CD4-positive, alpha-beta memory T cell (primary cell): ENCODE measurements at regions of chr1 and their contacts with region 1.

Region 1: GRCh38 chr1:171485375-171486047 is at the start of gene PRRC2C:
- DNase-seq: peak; percentile 93 to 96 (median 95)
- H3K4me3 ChIP-seq: peak within 1 kb of the TSS; percentile 45 to 99
- H3K4me3 Mint-ChIP-seq: peak within 1 kb of the TSS; percentile 90 to 99 (median 93)
- H3K27ac ChIP-seq: peak within 1 kb of the TSS; percentile 100
- H3K27ac Mint-ChIP-seq: peak within 1 kb of the TSS; percentile 95 to 100 (median 100)
- H3K4me1 ChIP-seq: peaks cover 48% of the 10 kb centered on the region
- H3K4me1 Mint-ChIP-seq: peaks cover 40 to 56% (median 48%) of the 10 kb centered on the region in 4 donors
- H3K27me3 ChIP-seq: no peaks in the 10 kb centered on the region
- H3K27me3 Mint-ChIP-seq: no peaks in the 10 kb centered on the region
- total RNA-seq, gene PRRC2C: 279 to 298 TPM

Region 2: DNA sequence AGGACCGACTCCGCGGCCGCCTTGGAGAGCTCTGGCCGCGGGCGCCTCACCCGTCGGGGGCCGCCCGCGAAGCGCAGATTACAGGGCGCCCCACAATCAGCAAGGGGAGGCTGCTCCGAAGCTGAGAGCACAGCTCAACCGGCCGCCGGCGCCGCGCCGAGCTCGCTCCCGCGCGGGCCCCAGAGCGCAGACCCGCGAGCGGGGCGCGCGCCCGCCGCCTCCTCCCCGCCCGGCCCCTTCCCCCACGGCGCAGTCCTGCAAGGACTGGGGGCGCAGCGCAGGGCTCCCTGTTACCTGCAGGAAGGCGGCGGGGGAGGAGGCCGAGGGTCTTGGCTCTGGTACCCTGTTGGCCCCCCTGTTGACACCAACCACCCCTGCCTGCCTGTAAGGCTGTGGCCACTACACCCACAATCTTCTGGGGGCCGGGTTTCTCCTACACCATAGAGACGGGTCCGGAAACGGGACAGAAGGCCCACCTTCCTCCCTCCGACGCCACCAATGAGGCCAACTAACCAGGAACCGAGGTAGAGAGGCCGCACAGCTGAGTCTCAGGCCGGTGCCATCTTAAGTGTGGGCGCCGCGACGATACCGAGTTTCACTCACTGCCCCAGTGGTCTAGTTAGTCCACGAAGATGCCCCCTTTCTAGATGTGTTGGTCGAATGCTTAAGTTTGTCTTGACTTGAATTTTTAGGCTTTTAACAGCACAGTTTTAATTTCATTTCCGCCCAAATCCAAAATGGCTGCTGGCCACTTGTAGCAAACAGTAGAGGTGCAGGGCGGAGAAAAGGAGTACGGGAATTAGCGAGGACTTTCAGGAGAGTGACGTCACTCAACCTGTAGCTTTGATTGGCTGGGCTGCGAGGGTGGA is 1591.8 kb before region 1 on chr1 and contains the start of gene SCYL3:
- CTCF ChIA-PET with region 1: no interaction called
- POLR2A ChIA-PET with region 1: interaction called, 4 read pairs
- intact Hi-C with region 1: loop called (anchors 1 kb)
- DNase-seq: peak; percentile 96 to 97 (median 96)
- H3K4me3 ChIP-seq: peak within 1 kb of the TSS; percentile 58 to 86
- H3K4me3 Mint-ChIP-seq: peak within 1 kb of the TSS; percentile 92 to 97 (median 94)
- H3K27ac ChIP-seq: peak within 1 kb of the TSS; percentile 98
- H3K27ac Mint-ChIP-seq: peak within 1 kb of the TSS; percentile 97 to 100 (median 100)
- H3K4me1 ChIP-seq: peaks cover 46% of the 10 kb centered on the region
- H3K4me1 Mint-ChIP-seq: peaks cover 35 to 51% (median 43%) of the 10 kb centered on the region in 4 donors
- H3K27me3 ChIP-seq: no peaks in the 10 kb centered on the region
- H3K27me3 Mint-ChIP-seq: peaks cover 0 to 2% of the 10 kb centered on the region in 2 donors
- total RNA-seq, gene SCYL3: 23.5 to 24.3 TPM

Region 3: DNA sequence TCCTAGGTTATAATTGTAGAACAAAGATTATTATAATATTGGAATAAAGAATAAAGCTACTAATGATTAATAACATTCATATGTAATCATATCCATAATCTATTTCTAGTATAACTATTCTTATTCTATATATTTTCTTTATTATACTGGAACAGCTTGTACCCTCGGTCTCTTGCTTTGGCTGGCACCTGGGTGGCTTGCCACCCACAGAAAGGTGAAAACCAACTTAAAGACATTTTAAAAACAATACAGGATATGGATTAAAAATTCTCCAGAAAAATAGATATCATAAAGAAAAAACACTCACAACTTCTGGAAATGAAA is 80.2 kb before region 1 on chr1:
- CTCF ChIA-PET with region 1: no interaction called
- POLR2A ChIA-PET with region 1: no interaction called
- intact Hi-C with region 1: no loop called
- DNase-seq: no peak
- H3K4me3 ChIP-seq: no peak overlapping the region
- H3K4me3 Mint-ChIP-seq: no peak overlapping the region
- H3K27ac ChIP-seq: no peak overlapping the region
- H3K27ac Mint-ChIP-seq: no peak overlapping the region
- H3K4me1 ChIP-seq: no peaks in the 10 kb centered on the region
- H3K4me1 Mint-ChIP-seq: peaks cover 0 to 2% (median 0%) of the 10 kb centered on the region in 4 donors
- H3K27me3 ChIP-seq: no peaks in the 10 kb centered on the region
- H3K27me3 Mint-ChIP-seq: peaks cover 2 to 7% of the 10 kb centered on the region in 2 donors

Region 4: GRCh38 chr1:171422511-171422910 is 63.0 kb before region 1 on chr1:
- CTCF ChIA-PET with region 1: interaction called, 5 read pairs
- POLR2A ChIA-PET with region 1: interaction called, 34 read pairs
- intact Hi-C with region 1: loop called (anchors 2 kb)
- DNase-seq: no peak
- H3K4me3 ChIP-seq: no peak overlapping the region
- H3K4me3 Mint-ChIP-seq: no peak overlapping the region
- H3K27ac ChIP-seq: no peak overlapping the region
- H3K27ac Mint-ChIP-seq: peak overlapping the region in 4 of 7 donors; percentile 7 to 73 (median 38)
- H3K4me1 ChIP-seq: peaks cover 32% of the 10 kb centered on the region
- H3K4me1 Mint-ChIP-seq: peaks cover 21 to 38% (median 28%) of the 10 kb centered on the region in 4 donors
- H3K27me3 ChIP-seq: no peaks in the 10 kb centered on the region
- H3K27me3 Mint-ChIP-seq: no peaks in the 10 kb centered on the region

Region 5: GRCh38 chr1:171501305-171502024 is 16.0 kb after region 1 on chr1:
- CTCF ChIA-PET with region 1: interaction called, 15 read pairs
- POLR2A ChIA-PET with region 1: interaction called, 5 read pairs
- intact Hi-C with region 1: no loop called
- DNase-seq: no peak
- H3K4me3 ChIP-seq: no peak overlapping the region
- H3K4me3 Mint-ChIP-seq: peak overlapping the region in 4 of 8 donors; percentile 12 to 68 (median 36)
- H3K27ac ChIP-seq: peak overlapping the region; percentile 6
- H3K27ac Mint-ChIP-seq: peak overlapping the region in 5 of 7 donors; percentile 38 to 72 (median 61)
- H3K4me1 ChIP-seq: peaks cover 94% of the 10 kb centered on the region
- H3K4me1 Mint-ChIP-seq: peaks cover 68 to 94% (median 82%) of the 10 kb centered on the region in 4 donors
- H3K27me3 ChIP-seq: no peaks in the 10 kb centered on the region
- H3K27me3 Mint-ChIP-seq: no peaks in the 10 kb centered on the region

Region 6: DNA sequence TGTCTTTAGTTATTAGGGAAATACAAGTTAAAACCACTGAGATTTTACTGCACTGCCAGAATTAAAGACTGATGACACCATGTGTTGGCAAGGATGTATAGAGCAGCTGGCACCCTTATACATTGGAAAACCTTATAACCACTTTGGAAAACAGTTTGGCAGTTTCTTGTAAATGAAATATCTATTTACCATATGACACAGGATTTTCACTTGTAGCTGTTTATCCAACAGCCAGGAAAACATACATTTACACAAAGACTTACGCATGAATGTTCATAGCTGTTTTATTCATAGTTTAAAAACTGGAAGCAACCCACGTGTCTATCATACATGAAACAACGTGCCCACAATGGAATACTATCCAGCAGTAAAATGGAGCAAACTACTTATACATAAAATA is 45.2 kb after region 1 on chr1:
- CTCF ChIA-PET with region 1: interaction called, 9 read pairs
- POLR2A ChIA-PET with region 1: interaction called, 7 read pairs
- intact Hi-C with region 1: loop called (anchors 10 kb)
- DNase-seq: no peak
- H3K4me3 ChIP-seq: no peak overlapping the region
- H3K4me3 Mint-ChIP-seq: no peak overlapping the region
- H3K27ac ChIP-seq: no peak overlapping the region
- H3K27ac Mint-ChIP-seq: no peak overlapping the region
- H3K4me1 ChIP-seq: no peaks in the 10 kb centered on the region
- H3K4me1 Mint-ChIP-seq: peaks cover 4 to 11% (median 6%) of the 10 kb centered on the region in 4 donors
- H3K27me3 ChIP-seq: no peaks in the 10 kb centered on the region
- H3K27me3 Mint-ChIP-seq: no peaks in the 10 kb centered on the region

Region 7: DNA sequence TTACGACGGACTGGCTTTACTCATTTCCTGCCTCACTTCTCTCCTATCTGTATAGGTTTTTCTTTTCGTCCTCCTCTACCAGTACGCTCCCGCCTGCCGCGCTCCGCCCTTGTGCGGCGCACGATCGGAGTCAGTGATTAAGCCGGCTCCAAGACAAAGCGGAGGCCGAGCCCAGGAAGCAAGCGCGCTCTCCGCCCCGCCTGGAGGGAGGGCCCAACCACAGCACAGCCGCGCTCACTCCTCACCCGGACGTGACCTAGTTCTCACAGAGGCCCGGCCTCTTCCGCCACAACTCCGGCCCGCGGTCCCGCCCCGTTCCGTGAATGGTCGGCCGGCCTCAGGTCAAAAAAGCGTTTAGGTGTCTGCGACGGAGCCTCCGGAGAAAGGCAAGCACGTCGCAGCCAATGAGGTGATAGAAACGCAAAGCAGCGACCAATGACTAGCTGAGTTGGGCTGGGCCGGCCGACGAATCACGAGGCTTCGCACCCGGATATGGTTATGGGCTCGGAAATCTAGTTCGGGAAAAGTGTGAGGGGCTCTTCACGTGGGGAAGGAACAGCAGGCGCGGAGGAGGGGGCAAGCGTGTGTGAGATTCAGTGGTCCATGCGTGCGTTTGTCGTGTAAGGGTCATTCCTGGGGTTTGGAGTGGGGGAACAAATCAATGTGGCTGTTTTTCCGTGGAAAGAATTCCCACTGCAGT is 295.8 kb after region 1 on chr1 and contains the start of gene METTL13:
- CTCF ChIA-PET with region 1: interaction called, 5 read pairs
- POLR2A ChIA-PET with region 1: interaction called, 11 read pairs
- intact Hi-C with region 1: loop called (anchors 1 kb)
- DNase-seq: peak; percentile 98 to 100 (median 99)
- H3K4me3 ChIP-seq: peak within 1 kb of the TSS; percentile 92 to 99
- H3K4me3 Mint-ChIP-seq: peak within 1 kb of the TSS; percentile 94 to 100 (median 96)
- H3K27ac ChIP-seq: peak within 1 kb of the TSS; percentile 71
- H3K27ac Mint-ChIP-seq: peak within 1 kb of the TSS; percentile 86 to 99 (median 98)
- H3K4me1 ChIP-seq: peaks cover 53% of the 10 kb centered on the region
- H3K4me1 Mint-ChIP-seq: peaks cover 37 to 67% (median 48%) of the 10 kb centered on the region in 4 donors
- H3K27me3 ChIP-seq: no peaks in the 10 kb centered on the region
- H3K27me3 Mint-ChIP-seq: no peaks in the 10 kb centered on the region
- total RNA-seq, gene METTL13: 33.3 to 36.7 TPM

Region 8: GRCh38 chr1:171984850-171985485 is 499.5 kb after region 1 on chr1:
- CTCF ChIA-PET with region 1: interaction called, 8 read pairs
- POLR2A ChIA-PET with region 1: no interaction called
- intact Hi-C with region 1: loop called (anchors 10 kb)
- DNase-seq: peak in 4 of 5 donors; percentile 46 to 55 (median 49)
- H3K4me3 ChIP-seq: no peak overlapping the region
- H3K4me3 Mint-ChIP-seq: no peak overlapping the region
- H3K27ac ChIP-seq: no peak overlapping the region
- H3K27ac Mint-ChIP-seq: no peak overlapping the region
- H3K4me1 ChIP-seq: no peaks in the 10 kb centered on the region
- H3K4me1 Mint-ChIP-seq: no peaks in the 10 kb centered on the region
- H3K27me3 ChIP-seq: no peaks in the 10 kb centered on the region
- H3K27me3 Mint-ChIP-seq: peaks cover 0 to 5% of the 10 kb centered on the region in 2 donors